HCT116 (cell line): ENCODE measurements at regions of chr1 and their contacts with region 1.

Region 1: DNA sequence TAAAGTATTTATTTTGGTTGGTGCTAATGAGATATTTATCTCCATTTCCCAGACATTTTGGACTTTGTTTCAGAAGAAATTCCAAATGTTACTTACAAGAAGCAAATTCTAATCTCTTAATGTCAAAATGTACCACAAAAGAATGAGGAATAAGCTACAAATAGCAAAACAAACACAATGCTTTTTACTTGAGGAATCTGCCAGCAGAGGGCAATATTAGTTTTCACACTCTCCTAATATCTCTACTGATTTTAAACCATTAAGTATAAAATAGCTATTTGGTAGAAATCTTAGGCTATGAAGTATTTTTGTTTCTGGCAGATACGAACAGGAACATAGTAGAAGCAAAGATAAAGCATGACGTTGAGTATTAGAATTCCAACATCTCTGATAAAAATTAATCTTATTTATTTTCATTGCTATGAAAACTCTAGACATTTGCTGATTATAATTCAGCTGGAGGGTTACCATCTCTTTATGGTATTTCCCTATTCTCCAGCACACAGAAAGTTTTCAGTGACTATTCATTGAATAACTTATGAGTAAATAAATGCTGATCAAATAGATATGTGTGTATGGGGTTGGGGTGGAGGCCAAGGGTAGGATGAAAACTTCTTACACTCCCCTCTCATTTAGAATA is 13.4 kb upstream of the HMCN1 start:
- DNase-seq: peak; percentile 35
- ATAC-seq: peak; percentile 53; the same call in 1 of the 2 replicates
- H3K4me3 ChIP-seq: no peak overlapping the region
- H3K27ac ChIP-seq: no peak overlapping the region
- H3K4me1 ChIP-seq: peaks cover 0 to 7% of the 10 kb centered on the region in 2 experiments; a peak in 3 of 4 replicates
- H3K27me3 ChIP-seq: no peaks in the 10 kb centered on the region
- CTCF ChIP-seq: peak; percentile 36 to 78 (median 39); a peak in 5 of 6 replicates
- POLR2A ChIP-seq: no peak
- RAD21 ChIP-seq: peak; percentile 62

Region 2: DNA sequence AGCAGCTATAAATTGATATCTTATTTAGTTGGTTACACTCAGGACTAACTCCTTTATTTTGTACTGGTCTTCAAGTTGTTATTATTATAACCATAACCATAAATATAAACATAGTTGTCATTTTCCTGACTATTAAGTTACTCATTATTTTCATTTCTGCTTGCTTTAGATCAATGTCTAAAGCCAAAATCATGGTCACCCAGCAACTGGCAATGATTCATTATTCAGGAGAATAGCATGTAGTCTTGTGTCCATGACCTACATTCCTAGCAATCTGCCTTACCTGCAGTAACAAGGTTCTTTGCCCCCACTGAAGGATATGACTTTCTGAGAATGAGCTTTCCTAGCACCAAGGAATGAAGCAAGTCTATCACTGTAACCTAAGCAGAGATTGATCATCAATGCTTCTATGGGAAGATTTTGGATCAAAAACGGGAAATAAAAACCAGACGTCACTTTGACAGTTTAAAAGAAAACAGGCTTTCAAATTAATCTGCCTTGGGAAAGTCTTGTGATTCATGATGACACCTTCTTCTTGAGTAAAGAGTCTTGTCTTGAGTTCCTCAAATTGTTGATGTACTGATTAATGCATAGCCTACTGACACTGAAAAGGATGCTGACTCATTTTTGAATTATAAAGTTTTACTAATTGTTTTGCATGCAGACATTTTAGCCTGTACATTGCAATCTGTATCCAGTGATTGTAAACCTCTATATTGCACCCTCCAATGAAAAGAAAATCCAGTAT is 200.4 kb before region 1 on chr1:
- CTCF ChIA-PET with region 1: no interaction called
- POLR2A ChIA-PET with region 1: no interaction called
- RAD21 ChIA-PET with region 1: no interaction called
- intact Hi-C with region 1: no loop called
- DNase-seq: no peak
- ATAC-seq: no peak
- H3K4me3 ChIP-seq: no peak overlapping the region
- H3K27ac ChIP-seq: no peak overlapping the region
- H3K4me1 ChIP-seq: no peaks in the 10 kb centered on the region
- H3K27me3 ChIP-seq: no peaks in the 10 kb centered on the region
- CTCF ChIP-seq: no peak
- POLR2A ChIP-seq: no peak
- RAD21 ChIP-seq: no peak

Region 3: GRCh38 chr1:185603158-185603557 is 117.6 kb before region 1 on chr1:
- CTCF ChIA-PET with region 1: no interaction called
- POLR2A ChIA-PET with region 1: no interaction called
- RAD21 ChIA-PET with region 1: no interaction called
- intact Hi-C with region 1: no loop called
- DNase-seq: no peak
- ATAC-seq: no peak
- H3K4me3 ChIP-seq: no peak overlapping the region
- H3K27ac ChIP-seq: no peak overlapping the region
- H3K4me1 ChIP-seq: no peaks in the 10 kb centered on the region
- H3K27me3 ChIP-seq: no peaks in the 10 kb centered on the region
- CTCF ChIP-seq: no peak
- POLR2A ChIP-seq: no peak
- RAD21 ChIP-seq: no peak

Region 4: GRCh38 chr1:185701650-185702049 is 19.1 kb before region 1 on chr1:
- CTCF ChIA-PET with region 1: interaction called, 10 read pairs
- POLR2A ChIA-PET with region 1: no interaction called
- RAD21 ChIA-PET with region 1: no interaction called
- intact Hi-C with region 1: no loop called
- DNase-seq: no peak
- ATAC-seq: no peak
- H3K4me3 ChIP-seq: no peak overlapping the region
- H3K27ac ChIP-seq: no peak overlapping the region
- H3K4me1 ChIP-seq: no peaks in the 10 kb centered on the region
- H3K27me3 ChIP-seq: no peaks in the 10 kb centered on the region
- CTCF ChIP-seq: no peak
- POLR2A ChIP-seq: no peak
- RAD21 ChIP-seq: no peak

Region 5: GRCh38 chr1:185733818-185734771 is 13.3 kb after region 1 on chr1 and contains the start of gene HMCN1:
- CTCF ChIA-PET with region 1: interaction called, 30 read pairs
- POLR2A ChIA-PET with region 1: interaction called, 3 read pairs
- RAD21 ChIA-PET with region 1: no interaction called
- intact Hi-C with region 1: no loop called
- DNase-seq: peak; percentile 41
- ATAC-seq: peak; percentile 85
- H3K4me3 ChIP-seq: peak within 1 kb of the TSS; percentile 54 to 64
- H3K27ac ChIP-seq: no peak within 1 kb of the TSS; the same call in 1 of the 2 replicates
- H3K4me1 ChIP-seq: peaks cover 2 to 21% of the 10 kb centered on the region in 2 experiments; a peak in 3 of 4 replicates
- H3K27me3 ChIP-seq: no peaks in the 10 kb centered on the region
- CTCF ChIP-seq: peak; percentile 23 to 65 (median 63); a peak in 5 of 6 replicates
- POLR2A ChIP-seq: no peak
- RAD21 ChIP-seq: peak; percentile 22; the same call in 1 of the 2 replicates
- total RNA-seq, gene HMCN1: 0.59 TPM

Region 6: DNA sequence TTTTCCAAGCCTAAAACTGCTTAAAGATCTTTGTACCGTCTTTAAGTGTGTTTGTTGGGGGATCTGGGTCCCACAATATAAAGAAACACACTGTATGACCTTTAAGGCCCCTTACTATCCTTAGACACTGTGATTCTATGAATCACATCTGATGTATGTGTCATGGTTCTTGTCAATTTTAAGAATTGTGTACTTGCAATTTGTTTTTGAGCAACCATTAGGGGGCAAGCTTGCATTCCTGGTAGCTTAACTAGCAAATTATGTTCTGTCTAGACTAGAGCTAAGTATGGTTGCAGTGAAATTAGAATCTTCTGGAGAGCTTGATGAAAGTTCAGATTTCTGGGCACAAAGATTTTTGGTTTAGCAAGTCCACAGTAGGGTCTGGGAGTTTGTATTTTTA is 434.8 kb after region 1 on chr1:
- CTCF ChIA-PET with region 1: interaction called, 10 read pairs
- POLR2A ChIA-PET with region 1: no interaction called
- RAD21 ChIA-PET with region 1: interaction called in 1 of 2 experiments, 3 read pairs
- intact Hi-C with region 1: no loop called
- DNase-seq: peak; percentile 53
- ATAC-seq: peak; percentile 86
- H3K4me3 ChIP-seq: no peak overlapping the region
- H3K27ac ChIP-seq: no peak overlapping the region
- H3K4me1 ChIP-seq: peaks cover 7 to 16% of the 10 kb centered on the region in 2 experiments; a peak in 3 of 4 replicates
- H3K27me3 ChIP-seq: no peaks in the 10 kb centered on the region
- CTCF ChIP-seq: peak; percentile 57 to 77 (median 74)
- POLR2A ChIP-seq: no peak
- RAD21 ChIP-seq: peak; percentile 83